ENCODE measurements at regions of chrX and their contacts with region 1.

Region 1: DNA sequence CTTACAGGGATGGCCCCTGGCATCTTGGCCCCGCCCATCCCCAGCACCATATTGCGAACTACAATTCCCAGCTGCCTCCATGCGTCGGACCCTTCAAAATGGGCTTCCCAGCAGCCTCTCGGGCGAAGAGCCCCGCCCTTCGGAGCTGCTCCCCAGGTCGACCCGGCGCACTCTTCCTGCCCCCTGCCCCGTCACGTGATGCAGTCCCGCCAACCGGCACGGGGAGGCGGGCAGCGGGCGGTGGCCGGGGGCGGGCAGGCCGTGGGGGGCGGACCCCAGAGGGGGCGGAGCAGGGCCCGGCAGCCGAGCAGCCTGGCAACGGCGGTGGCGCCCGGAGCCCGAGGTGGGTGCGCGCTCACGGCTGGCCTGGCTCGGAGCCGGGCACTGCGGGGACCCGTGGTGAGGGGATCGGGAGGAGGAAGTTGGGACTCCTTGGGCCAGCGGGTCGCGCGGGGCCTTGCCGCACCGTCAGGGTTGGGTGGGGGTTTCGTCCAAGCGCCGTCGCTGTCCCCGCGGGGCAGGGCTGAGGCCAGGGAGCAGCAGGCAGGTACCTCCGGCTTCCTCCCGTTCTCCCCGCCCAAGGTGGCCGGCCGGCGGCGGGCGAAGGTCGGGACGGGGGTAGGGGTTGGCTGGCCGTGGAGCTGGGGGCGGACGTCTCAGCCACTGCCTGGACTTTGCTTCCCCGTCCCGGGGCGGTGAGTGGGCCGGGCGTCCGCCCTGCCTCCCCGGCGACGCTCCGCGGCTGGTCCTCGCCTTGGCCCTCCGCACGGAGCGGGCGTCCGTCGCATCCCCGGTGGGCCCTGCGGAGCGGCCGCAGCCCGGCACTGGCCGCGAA is at the start of gene MTM1:
- DNase-seq: peak; percentile 82 to 95 (median 88)
- ATAC-seq: peak; percentile 91
- H3K4me3 ChIP-seq: peak within 1 kb of the TSS; percentile 58 to 71
- H3K4me3 Mint-ChIP-seq: peak within 1 kb of the TSS; percentile 88
- H3K27ac ChIP-seq: peak within 1 kb of the TSS; percentile 31 to 79
- H3K27ac Mint-ChIP-seq: peak within 1 kb of the TSS; percentile 86
- H3K4me1 ChIP-seq: peaks cover 38% of the 10 kb centered on the region
- H3K4me1 Mint-ChIP-seq: peaks cover 39% of the 10 kb centered on the region
- H3K27me3 ChIP-seq: no peaks in the 10 kb centered on the region
- H3K27me3 Mint-ChIP-seq: no peaks in the 10 kb centered on the region
- CTCF ChIP-seq: no peak
- total RNA-seq, gene MTM1: 16.0 to 18.8 TPM

Region 2: DNA sequence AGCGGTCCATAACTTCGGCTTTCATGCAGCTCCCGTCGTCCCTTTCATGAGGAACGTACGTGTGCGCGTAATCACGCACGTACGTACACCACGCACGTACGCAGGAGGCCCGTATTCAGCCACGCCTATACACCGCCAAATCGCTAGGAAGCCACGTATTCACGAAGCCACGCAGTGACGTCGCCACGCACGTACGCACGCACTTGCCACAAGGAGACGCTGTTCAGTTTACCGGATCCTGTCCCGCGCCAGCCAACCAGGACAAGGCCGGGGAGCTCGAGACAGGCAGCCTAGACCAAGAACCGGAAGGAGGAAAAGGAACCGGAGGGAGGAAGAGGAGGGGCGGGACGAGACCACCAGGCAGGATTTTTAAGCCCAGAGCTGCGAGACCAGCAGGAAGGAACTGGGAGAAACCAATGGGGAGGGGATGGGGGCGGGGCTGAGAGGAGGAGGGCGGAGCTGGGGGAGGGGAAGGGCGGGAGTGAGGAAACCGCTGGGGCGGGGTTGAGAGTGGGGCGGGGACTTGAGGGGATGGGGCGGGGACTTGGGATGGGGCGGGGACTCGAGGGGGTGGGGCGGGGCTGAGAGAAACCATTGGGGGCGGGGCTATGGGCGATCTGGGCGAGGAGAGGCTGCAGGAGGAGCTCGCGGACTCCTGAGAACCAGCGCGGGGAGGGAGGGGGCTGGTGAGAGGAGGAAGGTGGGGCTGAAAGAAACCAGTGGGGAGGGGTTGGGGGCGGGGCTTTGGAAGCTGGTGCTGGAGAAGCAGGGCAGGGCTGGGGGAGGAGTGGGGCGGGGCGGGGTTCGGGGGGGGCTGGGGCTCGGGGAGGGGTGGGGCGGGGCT is 629.9 kb before region 1 on chrX and contains the start of gene EOLA2:
- CTCF ChIA-PET with region 1: no interaction called
- POLR2A ChIA-PET with region 1: interaction called, 5 read pairs
- intact Hi-C with region 1: loop called in 1 of 2 experiments (anchors 2 kb)
- DNase-seq: peak; percentile 83 to 98 (median 91)
- ATAC-seq: peak; percentile 52
- H3K4me3 ChIP-seq: peak within 1 kb of the TSS; percentile 69 to 89
- H3K4me3 Mint-ChIP-seq: peak within 1 kb of the TSS; percentile 94
- H3K27ac ChIP-seq: peak within 1 kb of the TSS; percentile 92 to 99
- H3K27ac Mint-ChIP-seq: peak within 1 kb of the TSS; percentile 98
- H3K4me1 ChIP-seq: peaks cover 7% of the 10 kb centered on the region
- H3K4me1 Mint-ChIP-seq: peaks cover 3% of the 10 kb centered on the region
- H3K27me3 ChIP-seq: no peaks in the 10 kb centered on the region
- H3K27me3 Mint-ChIP-seq: no peaks in the 10 kb centered on the region
- CTCF ChIP-seq: no peak
- total RNA-seq, gene EOLA2: 43.7 to 44.4 TPM

Region 3: GRCh38 chrX:150547375-150548115 is 21.0 kb before region 1 on chrX:
- CTCF ChIA-PET with region 1: no interaction called
- POLR2A ChIA-PET with region 1: interaction called, 8 read pairs
- intact Hi-C with region 1: loop called in 1 of 2 experiments (anchors 2 kb)
- DNase-seq: peak in 2 of 9 experiments; percentile 25 to 29
- ATAC-seq: no peak
- H3K4me3 ChIP-seq: peak overlapping the region; percentile 28 to 33
- H3K4me3 Mint-ChIP-seq: peak overlapping the region; percentile 81
- H3K27ac ChIP-seq: no peak overlapping the region
- H3K27ac Mint-ChIP-seq: no peak overlapping the region
- H3K4me1 ChIP-seq: peaks cover 26% of the 10 kb centered on the region
- H3K4me1 Mint-ChIP-seq: peaks cover 18% of the 10 kb centered on the region
- H3K27me3 ChIP-seq: no peaks in the 10 kb centered on the region
- H3K27me3 Mint-ChIP-seq: no peaks in the 10 kb centered on the region
- CTCF ChIP-seq: no peak

Region 4: GRCh38 chrX:150898343-150899190 is 330.0 kb after region 1 on chrX and contains the start of gene CD99L2:
- CTCF ChIA-PET with region 1: no interaction called
- POLR2A ChIA-PET with region 1: no interaction called
- intact Hi-C with region 1: loop called in 1 of 2 experiments (anchors 5 kb)
- DNase-seq: peak; percentile 83 to 93 (median 89)
- ATAC-seq: peak; percentile 92
- H3K4me3 ChIP-seq: peak within 1 kb of the TSS; percentile 76 to 77
- H3K4me3 Mint-ChIP-seq: peak within 1 kb of the TSS; percentile 91
- H3K27ac ChIP-seq: peak within 1 kb of the TSS; percentile 36 to 63
- H3K27ac Mint-ChIP-seq: peak within 1 kb of the TSS; percentile 67
- H3K4me1 ChIP-seq: peaks cover 6% of the 10 kb centered on the region
- H3K4me1 Mint-ChIP-seq: peaks cover 11% of the 10 kb centered on the region
- H3K27me3 ChIP-seq: no peaks in the 10 kb centered on the region
- H3K27me3 Mint-ChIP-seq: no peaks in the 10 kb centered on the region
- CTCF ChIP-seq: no peak
- total RNA-seq, gene CD99L2: 6.4 TPM

Measured in CD8-positive, alpha-beta T cell (primary cell).